CD4-positive, alpha-beta T cell (primary cell): ENCODE measurements at regions of chr12 and their contacts with region 1.

Region 1: GRCh38 chr12:102061560-102062418 is at the start of gene WASHC3:
- DNase-seq: peak; percentile 87 to 97 (median 94)
- ATAC-seq: peak; percentile 91
- H3K4me3 ChIP-seq: peak within 1 kb of the TSS; percentile 88
- H3K4me3 Mint-ChIP-seq: peak within 1 kb of the TSS; percentile 94
- H3K27ac ChIP-seq: peak within 1 kb of the TSS; percentile 89 to 94
- H3K27ac Mint-ChIP-seq: peak within 1 kb of the TSS; percentile 98
- H3K4me1 ChIP-seq: peaks cover 19% of the 10 kb centered on the region
- H3K4me1 Mint-ChIP-seq: peaks cover 31% of the 10 kb centered on the region
- H3K27me3 ChIP-seq: no peaks in the 10 kb centered on the region
- H3K27me3 Mint-ChIP-seq: no peaks in the 10 kb centered on the region
- CTCF ChIP-seq: no peak
- total RNA-seq, gene WASHC3: 16.9 to 20.3 TPM

Region 2: GRCh38 chr12:100200463-100201181 is 1861.2 kb before region 1 on chr12 and contains the start of gene ACTR6:
- CTCF ChIA-PET with region 1: no interaction called
- POLR2A ChIA-PET with region 1: no interaction called
- intact Hi-C with region 1: loop called in 1 of 2 experiments (anchors 10 kb)
- DNase-seq: peak; percentile 94 to 99 (median 97)
- ATAC-seq: peak; percentile 84
- H3K4me3 ChIP-seq: peak within 1 kb of the TSS; percentile 73
- H3K4me3 Mint-ChIP-seq: peak within 1 kb of the TSS; percentile 98
- H3K27ac ChIP-seq: peak within 1 kb of the TSS; percentile 86 to 91
- H3K27ac Mint-ChIP-seq: peak within 1 kb of the TSS; percentile 99
- H3K4me1 ChIP-seq: peaks cover 47% of the 10 kb centered on the region
- H3K4me1 Mint-ChIP-seq: peaks cover 40% of the 10 kb centered on the region
- H3K27me3 ChIP-seq: no peaks in the 10 kb centered on the region
- H3K27me3 Mint-ChIP-seq: no peaks in the 10 kb centered on the region
- CTCF ChIP-seq: no peak
- total RNA-seq, gene ACTR6: 21.3 to 21.8 TPM

Region 3: GRCh38 chr12:101280006-101280505 is 781.7 kb before region 1 on chr12 and contains the start of gene UTP20:
- CTCF ChIA-PET with region 1: no interaction called
- POLR2A ChIA-PET with region 1: no interaction called
- intact Hi-C with region 1: loop called in 1 of 2 experiments (anchors 5 kb)
- DNase-seq: peak; percentile 89 to 96 (median 94)
- ATAC-seq: peak; percentile 100
- H3K4me3 ChIP-seq: peak within 1 kb of the TSS; percentile 72
- H3K4me3 Mint-ChIP-seq: peak within 1 kb of the TSS; percentile 97
- H3K27ac ChIP-seq: no peak within 1 kb of the TSS
- H3K27ac Mint-ChIP-seq: peak within 1 kb of the TSS; percentile 71
- H3K4me1 ChIP-seq: peaks cover 8% of the 10 kb centered on the region
- H3K4me1 Mint-ChIP-seq: peaks cover 25% of the 10 kb centered on the region
- H3K27me3 ChIP-seq: no peaks in the 10 kb centered on the region
- H3K27me3 Mint-ChIP-seq: peaks cover 13% of the 10 kb centered on the region
- CTCF ChIP-seq: no peak
- total RNA-seq, gene UTP20: 9.1 to 9.6 TPM

Region 4: DNA sequence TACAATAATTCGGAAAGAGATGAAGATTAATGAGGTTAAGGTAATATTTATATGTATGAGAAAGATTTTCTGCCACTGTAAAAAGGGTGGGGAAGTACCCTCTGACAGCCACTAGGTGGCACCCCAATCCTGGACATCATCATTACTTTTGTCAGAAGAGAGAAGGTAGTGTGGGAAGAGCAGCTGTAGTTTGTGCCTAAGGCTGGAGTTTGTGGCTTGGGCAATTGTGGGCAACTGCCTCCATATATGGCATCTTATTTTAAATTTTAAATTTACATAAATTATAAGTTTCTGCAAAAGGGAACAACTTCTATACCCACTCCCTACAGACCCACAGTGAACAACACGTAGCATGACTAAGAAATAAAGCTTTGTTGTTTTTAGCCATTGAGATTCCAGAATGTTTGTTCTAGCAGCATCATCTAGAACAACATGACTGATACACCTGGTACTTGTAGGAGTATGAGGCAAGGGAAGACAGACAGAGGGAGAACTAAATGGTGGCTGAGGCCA is 288.1 kb before region 1 on chr12:
- CTCF ChIA-PET with region 1: no interaction called
- POLR2A ChIA-PET with region 1: no interaction called
- intact Hi-C with region 1: loop called in 1 of 2 experiments (anchors 10 kb)
- DNase-seq: peak; percentile 52 to 85 (median 60)
- ATAC-seq: peak; percentile 97
- H3K4me3 ChIP-seq: no peak overlapping the region
- H3K4me3 Mint-ChIP-seq: no peak overlapping the region
- H3K27ac ChIP-seq: no peak overlapping the region
- H3K27ac Mint-ChIP-seq: no peak overlapping the region
- H3K4me1 ChIP-seq: no peaks in the 10 kb centered on the region
- H3K4me1 Mint-ChIP-seq: peaks cover 5% of the 10 kb centered on the region
- H3K27me3 ChIP-seq: no peaks in the 10 kb centered on the region
- H3K27me3 Mint-ChIP-seq: no peaks in the 10 kb centered on the region
- CTCF ChIP-seq: peak; percentile 92

Region 5: GRCh38 chr12:101876861-101877815 is 184.7 kb before region 1 on chr12 and contains the start of gene DRAM1:
- CTCF ChIA-PET with region 1: no interaction called
- POLR2A ChIA-PET with region 1: interaction called, 4 read pairs
- intact Hi-C with region 1: loop called in 1 of 2 experiments (anchors 10 kb)
- DNase-seq: peak; percentile 41 to 89 (median 60)
- ATAC-seq: peak; percentile 79
- H3K4me3 ChIP-seq: peak within 1 kb of the TSS; percentile 79
- H3K4me3 Mint-ChIP-seq: peak within 1 kb of the TSS; percentile 89
- H3K27ac ChIP-seq: peak within 1 kb of the TSS; percentile 29 to 73
- H3K27ac Mint-ChIP-seq: peak within 1 kb of the TSS; percentile 72
- H3K4me1 ChIP-seq: peaks cover 18% of the 10 kb centered on the region
- H3K4me1 Mint-ChIP-seq: peaks cover 7% of the 10 kb centered on the region
- H3K27me3 ChIP-seq: no peaks in the 10 kb centered on the region
- H3K27me3 Mint-ChIP-seq: no peaks in the 10 kb centered on the region
- CTCF ChIP-seq: no peak
- total RNA-seq, gene DRAM1: 1.3 to 1.6 TPM

Region 6: GRCh38 chr12:102781117-102781516 is 719.3 kb after region 1 on chr12:
- CTCF ChIA-PET with region 1: no interaction called
- POLR2A ChIA-PET with region 1: no interaction called
- intact Hi-C with region 1: no loop called
- DNase-seq: no peak
- ATAC-seq: no peak
- H3K4me3 ChIP-seq: no peak overlapping the region
- H3K4me3 Mint-ChIP-seq: no peak overlapping the region
- H3K27ac ChIP-seq: no peak overlapping the region
- H3K27ac Mint-ChIP-seq: no peak overlapping the region
- H3K4me1 ChIP-seq: no peaks in the 10 kb centered on the region
- H3K4me1 Mint-ChIP-seq: no peaks in the 10 kb centered on the region
- H3K27me3 ChIP-seq: peaks cover 0 to 4% of the 10 kb centered on the region in 2 experiments
- H3K27me3 Mint-ChIP-seq: no peaks in the 10 kb centered on the region
- CTCF ChIP-seq: no peak

Region 7: GRCh38 chr12:103840876-103841689 is 1779.3 kb after region 1 on chr12 and contains the start of gene NT5DC3:
- CTCF ChIA-PET with region 1: no interaction called
- POLR2A ChIA-PET with region 1: no interaction called
- intact Hi-C with region 1: loop called in 1 of 2 experiments (anchors 10 kb)
- DNase-seq: peak; percentile 72 to 92 (median 82)
- ATAC-seq: peak; percentile 87
- H3K4me3 ChIP-seq: peak within 1 kb of the TSS; percentile 78
- H3K4me3 Mint-ChIP-seq: peak within 1 kb of the TSS; percentile 94
- H3K27ac ChIP-seq: peak within 1 kb of the TSS in 1 of 2 donors; percentile 60
- H3K27ac Mint-ChIP-seq: peak within 1 kb of the TSS; percentile 78
- H3K4me1 ChIP-seq: peaks cover 19% of the 10 kb centered on the region
- H3K4me1 Mint-ChIP-seq: peaks cover 21% of the 10 kb centered on the region
- H3K27me3 ChIP-seq: no peaks in the 10 kb centered on the region
- H3K27me3 Mint-ChIP-seq: no peaks in the 10 kb centered on the region
- CTCF ChIP-seq: no peak
- total RNA-seq, gene NT5DC3: 3.5 to 4.0 TPM